ENCODE measurements at regions of chr3 and their contacts with region 1.

Region 1: DNA sequence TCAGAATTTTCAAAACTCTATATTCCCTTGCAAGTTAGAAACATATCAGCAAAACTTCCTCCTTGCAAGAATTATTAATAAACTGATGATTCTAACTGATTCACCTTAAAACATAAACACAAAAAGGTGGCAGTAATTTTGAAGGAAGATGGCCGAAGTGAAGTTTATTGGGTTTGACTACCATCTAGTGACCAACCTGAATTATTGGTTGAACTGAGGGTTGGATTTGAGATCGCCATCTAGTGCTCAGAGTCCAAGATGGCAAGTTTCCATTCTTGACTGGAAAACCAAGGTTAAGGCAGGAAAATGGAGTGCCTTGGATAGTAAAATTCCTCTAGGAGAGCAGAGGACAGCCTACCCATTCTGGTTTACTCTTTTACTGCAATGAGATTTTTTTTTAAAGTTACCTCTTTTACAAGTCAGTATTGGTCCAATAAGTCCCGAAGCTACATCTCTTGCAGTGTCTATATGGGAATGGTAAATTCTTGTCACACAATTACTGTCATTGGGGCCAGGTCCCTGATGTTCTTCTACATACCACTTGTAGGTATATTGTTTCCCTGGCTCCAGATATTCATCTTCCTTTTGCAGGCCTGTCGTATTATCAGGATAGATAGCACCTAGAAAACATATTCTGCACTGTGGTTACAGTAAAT is 51.6 kb upstream of the CP start:
- DNase-seq: peak in 4 of 5 donors; percentile 55 to 91 (median 78)
- H3K4me3 ChIP-seq: no peak overlapping the region
- H3K27ac ChIP-seq: no peak overlapping the region
- H3K4me1 ChIP-seq: no peaks in the 10 kb centered on the region
- H3K27me3 ChIP-seq: no peaks in the 10 kb centered on the region
- CTCF ChIP-seq: peak; percentile 99

Region 2: DNA sequence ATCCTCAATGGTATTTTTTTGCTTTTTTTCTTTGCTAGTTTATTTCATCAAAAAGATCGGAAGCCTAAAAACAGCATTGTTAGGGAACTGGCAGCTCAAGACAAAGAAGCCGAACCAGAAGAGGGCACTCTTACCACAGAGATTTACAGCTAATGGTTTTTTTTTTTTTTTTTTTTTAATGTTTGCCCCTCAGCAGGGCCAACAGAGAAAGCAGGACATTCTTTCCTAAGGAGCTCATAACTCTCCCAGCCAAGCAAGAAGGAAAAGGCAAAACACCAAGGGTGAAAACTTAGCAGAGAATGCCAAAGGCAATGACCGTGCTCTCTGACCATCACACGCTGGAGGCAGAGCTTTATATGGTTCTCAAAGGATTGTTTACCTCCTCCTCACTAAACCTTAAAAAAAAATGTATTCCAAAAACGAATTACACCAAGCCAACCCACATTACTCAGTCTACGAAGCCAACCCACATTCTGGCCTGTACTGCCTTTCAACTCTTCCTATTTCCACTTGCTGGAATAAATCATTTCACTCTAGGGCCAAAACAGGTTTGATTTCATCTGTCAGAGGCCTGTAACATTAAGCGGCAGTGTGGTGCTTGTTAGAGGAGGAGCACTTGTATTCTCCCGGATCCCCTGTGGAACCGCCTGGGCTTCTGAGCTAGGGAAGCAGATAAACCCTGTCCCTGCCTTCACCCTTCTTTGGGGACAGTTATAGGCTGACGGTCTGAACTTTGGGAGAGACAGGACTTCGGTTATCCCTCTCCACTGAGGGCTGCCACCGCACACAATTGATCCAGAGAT is 317.5 kb before region 1 on chr3:
- intact Hi-C with region 1: loop called (anchors 10 kb)
- DNase-seq: peak in 3 of 5 donors; percentile 39 to 91 (median 81)
- H3K4me3 ChIP-seq: no peak overlapping the region
- H3K27ac ChIP-seq: peak overlapping the region; percentile 2 to 27
- H3K4me1 ChIP-seq: peaks cover 0 to 3% (median 3%) of the 10 kb centered on the region in 3 donors
- H3K27me3 ChIP-seq: no peaks in the 10 kb centered on the region
- CTCF ChIP-seq: peak; percentile 57

Region 3: GRCh38 chr3:149120051-149120972 is 152.9 kb before region 1 on chr3:
- intact Hi-C with region 1: loop called (anchors 2 kb)
- DNase-seq: peak in 2 of 5 donors; percentile 73 to 86
- H3K4me3 ChIP-seq: no peak overlapping the region
- H3K27ac ChIP-seq: no peak overlapping the region
- H3K4me1 ChIP-seq: no peaks in the 10 kb centered on the region
- H3K27me3 ChIP-seq: no peaks in the 10 kb centered on the region
- CTCF ChIP-seq: peak; percentile 78

Region 4: DNA sequence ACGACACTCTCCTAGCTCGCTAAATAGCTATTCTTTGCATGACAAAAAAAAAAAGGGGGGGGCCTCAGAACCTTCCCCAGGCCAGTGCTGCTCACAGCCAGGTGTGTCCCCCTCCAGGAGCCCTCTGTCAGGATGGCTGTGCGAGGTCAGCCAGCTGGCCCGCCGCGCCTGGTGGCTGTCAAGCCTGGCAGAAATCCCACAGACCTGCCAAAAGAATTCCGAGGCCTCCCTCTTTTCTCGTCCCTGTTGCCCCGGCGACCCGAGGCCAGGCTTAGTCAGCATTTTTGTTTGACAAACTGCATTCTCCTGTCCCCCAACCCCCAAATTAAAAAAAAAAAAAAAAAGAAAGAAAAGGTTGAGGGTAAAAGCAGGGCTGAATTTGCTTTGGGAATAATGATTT is 263.2 kb after region 1 on chr3:
- intact Hi-C with region 1: no loop called
- DNase-seq: peak; percentile 62 to 85 (median 71)
- H3K4me3 ChIP-seq: no peak overlapping the region
- H3K27ac ChIP-seq: peak overlapping the region; percentile 3 to 54
- H3K4me1 ChIP-seq: peaks cover 6 to 31% (median 26%) of the 10 kb centered on the region in 3 donors
- H3K27me3 ChIP-seq: no peaks in the 10 kb centered on the region
- CTCF ChIP-seq: no peak